Activated CD4-positive, alpha-beta T cell treated with anti-CD3 and anti-CD28 coated beads for 36 hours (primary cell): ENCODE measurements at regions of chr6 and their contacts with region 1.

Region 1: GRCh38 chr6:166950443-166950821 is 5.9 kb downstream of the RNASET2 start:
- DNase-seq: peak; percentile 48
- ATAC-seq: peak; percentile 34
- H3K4me3 Mint-ChIP-seq: peak overlapping the region; percentile 61
- H3K27ac Mint-ChIP-seq: peak overlapping the region; percentile 95
- H3K4me1 Mint-ChIP-seq: peaks cover 62% of the 10 kb centered on the region
- H3K27me3 Mint-ChIP-seq: no peaks in the 10 kb centered on the region

Region 2: GRCh38 chr6:166830185-166830890 is 120.1 kb before region 1 on chr6:
- CTCF ChIA-PET with region 1: no interaction called
- POLR2A ChIA-PET with region 1: no interaction called
- intact Hi-C with region 1: loop called (anchors 2 kb)
- DNase-seq: peak; percentile 61
- ATAC-seq: peak; percentile 81
- H3K4me3 Mint-ChIP-seq: no peak overlapping the region
- H3K27ac Mint-ChIP-seq: no peak overlapping the region
- H3K4me1 Mint-ChIP-seq: peaks cover 14% of the 10 kb centered on the region
- H3K27me3 Mint-ChIP-seq: peaks cover 2% of the 10 kb centered on the region

Region 3: GRCh38 chr6:167141667-167142432 is 191.4 kb after region 1 on chr6:
- CTCF ChIA-PET with region 1: no interaction called
- POLR2A ChIA-PET with region 1: no interaction called
- intact Hi-C with region 1: loop called in 1 of 2 experiments (anchors 5 kb)
- DNase-seq: peak; percentile 75
- ATAC-seq: peak; percentile 85
- H3K4me3 Mint-ChIP-seq: no peak overlapping the region
- H3K27ac Mint-ChIP-seq: no peak overlapping the region
- H3K4me1 Mint-ChIP-seq: peaks cover 22% of the 10 kb centered on the region
- H3K27me3 Mint-ChIP-seq: peaks cover 3% of the 10 kb centered on the region